ENCODE measurements at regions of chr4 and their contacts with region 1.

Region 1: GRCh38 chr4:36709991-36710390 is 428.6 kb downstream of the DTHD1 start:
- DNase-seq: no peak
- ATAC-seq: no peak

Region 2: DNA sequence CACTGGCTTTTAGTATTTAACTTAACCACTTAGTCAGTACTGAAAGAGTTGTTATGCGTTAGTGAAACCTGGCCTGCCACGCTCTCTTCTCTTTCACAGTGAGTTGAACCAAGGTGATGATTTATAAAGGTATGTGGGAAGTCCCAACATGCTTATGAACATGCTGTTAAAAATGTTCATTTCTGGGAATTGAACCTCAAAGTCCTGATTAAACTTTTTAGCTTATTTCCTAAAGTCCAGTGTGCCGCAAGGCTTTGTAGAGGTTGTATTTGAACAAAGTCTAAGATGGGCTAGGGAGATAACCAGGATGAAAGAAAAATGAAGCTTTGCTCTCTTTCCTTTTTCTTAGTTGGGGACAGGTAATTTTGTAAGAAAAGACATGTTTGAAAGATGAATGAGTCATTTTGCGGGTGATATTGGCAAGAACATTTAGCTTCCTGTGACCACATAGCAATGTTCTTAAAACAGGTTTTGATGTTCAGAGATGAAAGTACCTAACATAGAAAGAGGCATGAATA is 158.2 kb before region 1 on chr4:
- intact Hi-C with region 1: no loop called
- DNase-seq: no peak
- ATAC-seq: no peak

Region 3: DNA sequence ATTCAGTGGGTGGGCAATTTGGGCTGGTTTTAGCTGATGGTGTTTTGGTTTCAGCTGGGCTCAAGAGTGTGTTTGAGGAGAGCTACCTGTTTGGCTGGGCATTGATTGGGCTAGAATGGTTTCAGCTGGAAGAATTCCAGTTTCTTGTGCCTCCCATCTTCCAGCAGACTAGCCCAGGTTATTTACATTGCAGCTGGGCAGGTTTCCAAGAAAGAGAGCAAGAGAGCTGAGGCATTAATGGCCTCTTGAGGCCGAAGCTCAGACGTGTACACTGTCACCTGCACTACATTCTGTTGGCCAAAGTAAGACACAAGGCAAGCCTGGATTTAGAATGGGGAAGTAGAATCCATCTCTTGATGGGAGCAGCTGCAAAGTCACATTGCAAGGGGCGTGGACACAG is 28.3 kb before region 1 on chr4:
- intact Hi-C with region 1: no loop called
- DNase-seq: no peak
- ATAC-seq: no peak

Region 4: DNA sequence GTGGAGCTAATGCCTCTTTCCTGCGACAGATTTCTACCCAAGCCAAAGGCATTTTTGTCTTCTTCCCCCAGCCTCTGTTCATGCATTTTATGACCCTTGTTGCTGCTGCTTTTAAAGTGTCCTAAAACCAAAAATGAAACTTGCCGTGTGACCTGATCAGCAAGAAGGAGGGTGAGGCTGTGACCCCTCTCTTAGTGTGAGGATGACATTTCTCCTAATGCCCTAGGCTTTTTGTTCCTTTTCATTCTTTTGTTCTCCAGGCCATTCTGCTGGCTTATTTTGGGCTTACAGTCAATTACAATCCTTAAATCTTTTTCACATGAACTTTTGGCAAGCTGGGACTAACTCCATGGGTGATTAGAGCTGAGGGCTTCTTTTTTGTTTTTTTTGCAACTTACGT is 1284.6 kb after region 1 on chr4:
- intact Hi-C with region 1: no loop called
- DNase-seq: no peak
- ATAC-seq: no peak

Region 5: DNA sequence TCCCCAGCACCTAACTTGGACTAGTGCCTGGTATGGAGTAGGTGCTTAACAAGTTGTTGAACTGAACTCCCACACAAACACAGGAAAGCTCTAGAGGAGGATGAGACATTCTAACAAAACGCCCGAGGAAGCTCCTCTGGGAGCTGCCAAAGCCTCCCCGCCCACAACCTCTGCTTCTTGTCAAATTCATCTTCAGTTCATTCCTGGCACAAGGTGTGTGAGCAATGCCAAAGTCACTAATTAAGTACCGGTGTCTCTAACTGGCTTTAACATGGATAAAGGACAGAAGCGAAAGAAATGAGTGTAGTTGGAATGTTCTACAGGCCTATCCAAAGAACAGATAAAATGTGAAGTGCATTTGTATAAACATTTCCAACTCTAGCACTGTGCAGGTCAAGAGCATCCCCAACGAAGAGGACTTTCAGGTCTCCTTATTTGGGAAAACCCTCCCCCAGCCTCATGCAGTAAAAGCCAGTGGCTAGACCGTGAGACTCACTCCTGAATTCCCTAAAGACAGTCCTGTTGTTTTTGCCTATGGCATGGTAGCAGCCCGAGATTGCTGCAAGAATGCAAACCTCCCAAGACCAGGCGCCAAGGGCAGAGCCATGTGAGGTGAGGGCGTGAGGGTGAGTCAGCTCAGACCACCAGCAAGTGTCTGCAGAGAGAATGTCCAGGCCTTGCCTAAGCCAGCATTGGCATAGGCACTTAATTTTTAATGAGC is 1881.8 kb after region 1 on chr4:
- intact Hi-C with region 1: loop called (anchors 5 kb)
- DNase-seq: no peak
- ATAC-seq: no peak